ENCODE measurements at regions of chr10 and their contacts with region 1.

Region 1: DNA sequence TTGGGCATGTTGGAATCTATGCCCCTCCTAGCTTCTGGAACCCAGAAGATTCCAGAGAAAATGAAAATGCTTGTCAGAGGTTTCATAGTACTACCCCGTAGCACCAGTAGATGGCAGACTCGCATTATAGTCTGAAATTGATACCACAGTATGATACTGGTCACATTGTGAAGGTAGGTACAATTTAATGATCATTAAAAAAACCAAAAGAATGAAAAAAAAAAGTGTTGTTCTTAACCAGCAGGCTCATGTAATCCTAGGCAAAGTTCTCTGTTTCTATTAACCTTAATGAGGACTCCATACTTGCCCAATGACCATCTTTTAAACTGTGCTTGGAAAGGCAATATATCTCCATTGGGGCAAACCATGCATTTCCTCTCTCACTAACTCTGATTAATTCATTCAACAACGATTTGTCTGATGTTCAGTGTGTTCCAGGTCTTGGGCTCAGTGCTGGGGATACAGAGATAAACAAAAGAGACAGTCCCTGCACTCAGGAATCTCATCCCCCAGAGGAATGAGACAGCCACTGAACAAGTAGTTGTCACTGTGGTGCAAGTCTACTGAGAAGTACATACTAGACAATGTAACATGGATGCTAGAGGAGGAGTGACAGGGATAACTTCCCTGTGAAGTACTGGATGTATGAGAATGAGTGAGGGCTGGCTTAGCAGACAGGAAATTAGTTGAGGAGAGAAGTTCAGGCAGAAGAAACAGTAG is 223.5 kb upstream of the PHYHIPL start:
- DNase-seq: no peak
- H3K4me3 ChIP-seq: peak overlapping the region in 1 of 4 donors; percentile 26
- H3K27ac ChIP-seq: peak overlapping the region; percentile 49 to 62 (median 58)
- H3K4me1 ChIP-seq: peaks cover 0 to 41% (median 29%) of the 10 kb centered on the region in 4 donors
- H3K27me3 ChIP-seq: no peaks in the 10 kb centered on the region
- CTCF ChIP-seq: peak; percentile 79 to 85 (median 83)
- EP300 ChIP-seq: no peak
- POLR2A ChIP-seq: no peak

Region 2: DNA sequence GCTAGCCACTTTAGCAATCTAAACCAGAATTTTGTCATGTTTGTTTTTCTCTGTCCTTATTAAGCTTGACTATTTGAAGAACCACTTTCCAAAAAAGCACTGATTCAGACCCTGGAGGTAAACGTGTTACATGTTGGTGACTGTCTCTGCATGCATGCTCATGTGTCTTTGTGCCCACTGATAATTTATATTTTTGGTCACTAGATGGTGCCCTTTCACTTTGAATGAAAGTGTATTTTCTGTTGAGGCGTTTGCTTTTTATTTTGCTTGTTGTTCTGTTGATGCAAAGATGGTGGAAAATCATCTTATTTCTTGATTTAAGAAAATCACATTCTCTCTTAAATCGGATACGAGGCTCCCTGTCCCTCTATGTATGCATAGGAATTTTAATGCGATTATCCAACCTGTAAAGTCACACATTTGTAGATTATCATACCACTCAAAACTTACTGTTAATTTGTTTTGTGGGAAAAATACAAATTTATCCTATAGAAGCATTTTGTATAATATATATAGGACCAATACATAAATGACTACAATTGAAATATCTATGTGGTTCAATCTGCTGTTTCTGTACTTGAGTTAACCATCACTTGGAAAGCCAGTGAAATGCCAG is 170.9 kb before region 1 on chr10:
- intact Hi-C with region 1: loop called (anchors 10 kb)
- DNase-seq: no peak
- H3K4me3 ChIP-seq: no peak overlapping the region
- H3K27ac ChIP-seq: no peak overlapping the region
- H3K4me1 ChIP-seq: peaks cover 5 to 24% (median 12%) of the 10 kb centered on the region in 4 donors
- H3K27me3 ChIP-seq: no peaks in the 10 kb centered on the region
- CTCF ChIP-seq: peak; percentile 59 to 60 (median 59)
- EP300 ChIP-seq: no peak
- POLR2A ChIP-seq: no peak

Region 3: DNA sequence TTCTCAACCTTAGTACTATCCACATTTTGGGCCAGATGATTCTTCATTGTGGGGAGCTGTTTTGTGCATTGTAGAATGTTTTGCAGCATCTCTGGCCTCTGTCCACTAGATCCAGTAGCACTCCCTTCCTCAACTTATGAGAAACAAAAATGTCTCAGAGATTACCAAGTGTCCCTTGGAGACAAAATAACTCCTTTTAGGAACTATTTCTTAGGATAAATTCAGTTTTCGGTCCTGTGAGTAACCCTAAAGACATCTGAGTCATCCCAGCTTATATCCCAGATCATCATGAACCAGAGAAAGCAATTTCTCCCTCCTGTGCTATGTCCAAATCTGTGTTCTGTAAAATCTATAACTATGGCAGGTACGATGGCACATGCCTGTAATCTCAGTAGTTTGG is 43.0 kb before region 1 on chr10:
- intact Hi-C with region 1: no loop called
- DNase-seq: no peak
- H3K4me3 ChIP-seq: no peak overlapping the region
- H3K27ac ChIP-seq: no peak overlapping the region
- H3K4me1 ChIP-seq: no peaks in the 10 kb centered on the region
- H3K27me3 ChIP-seq: no peaks in the 10 kb centered on the region
- CTCF ChIP-seq: no peak
- EP300 ChIP-seq: no peak
- POLR2A ChIP-seq: no peak

Region 4: GRCh38 chr10:59181668-59182067 is 228.8 kb after region 1 on chr10:
- intact Hi-C with region 1: loop called (anchors 5 kb)
- DNase-seq: no peak
- H3K4me3 ChIP-seq: no peak overlapping the region
- H3K27ac ChIP-seq: no peak overlapping the region
- H3K4me1 ChIP-seq: peaks cover 5 to 9% (median 9%) of the 10 kb centered on the region in 4 donors
- H3K27me3 ChIP-seq: peaks cover 0 to 48% (median 12%) of the 10 kb centered on the region in 4 donors
- CTCF ChIP-seq: peak; percentile 24 to 48 (median 26)
- EP300 ChIP-seq: no peak
- POLR2A ChIP-seq: no peak